B cell (primary cell): ENCODE measurements at regions of chr11 and their contacts with region 1.

Region 1: DNA sequence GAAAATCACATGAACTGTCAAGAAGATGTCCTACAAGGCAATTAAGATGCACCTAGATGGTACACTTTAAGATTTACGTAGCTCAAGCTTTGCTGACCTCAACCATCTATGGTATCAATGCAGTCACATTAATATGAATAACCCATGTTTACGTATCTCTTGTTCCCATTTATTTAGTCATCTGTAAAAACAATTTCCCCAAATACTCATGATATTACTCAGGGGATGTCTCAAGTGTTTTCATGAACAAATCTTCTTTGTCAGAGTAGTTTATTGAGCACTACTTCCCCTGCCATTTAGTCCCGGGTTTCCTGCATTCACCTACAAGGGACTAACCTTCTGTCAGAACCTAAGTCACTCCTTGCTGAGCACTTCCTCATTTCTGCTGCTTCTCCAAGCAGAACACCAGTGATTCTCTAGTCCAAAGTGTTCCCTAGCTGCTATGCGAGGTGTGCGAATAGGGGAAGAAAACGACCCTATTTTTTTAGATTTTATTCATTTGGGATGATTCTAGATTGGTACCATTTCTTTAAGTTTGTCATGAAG is 554.3 kb upstream of the LRRC4C start:
- DNase-seq: no peak
- ATAC-seq: no peak
- H3K4me3 ChIP-seq: no peak overlapping the region
- H3K4me3 Mint-ChIP-seq: no peak overlapping the region
- H3K27ac ChIP-seq: no peak overlapping the region
- H3K27ac Mint-ChIP-seq: no peak overlapping the region
- H3K4me1 ChIP-seq: no peaks in the 10 kb centered on the region
- H3K4me1 Mint-ChIP-seq: no peaks in the 10 kb centered on the region
- H3K27me3 ChIP-seq: no peaks in the 10 kb centered on the region
- H3K27me3 Mint-ChIP-seq: no peaks in the 10 kb centered on the region
- CTCF ChIP-seq: no peak

Region 2: GRCh38 chr11:41954034-41954433 is 59.7 kb before region 1 on chr11:
- CTCF ChIA-PET with region 1: no interaction called
- POLR2A ChIA-PET with region 1: no interaction called
- intact Hi-C with region 1: no loop called
- DNase-seq: no peak
- ATAC-seq: no peak
- H3K4me3 ChIP-seq: no peak overlapping the region
- H3K4me3 Mint-ChIP-seq: no peak overlapping the region
- H3K27ac ChIP-seq: no peak overlapping the region
- H3K27ac Mint-ChIP-seq: no peak overlapping the region
- H3K4me1 ChIP-seq: no peaks in the 10 kb centered on the region
- H3K4me1 Mint-ChIP-seq: no peaks in the 10 kb centered on the region
- H3K27me3 ChIP-seq: no peaks in the 10 kb centered on the region
- H3K27me3 Mint-ChIP-seq: no peaks in the 10 kb centered on the region
- CTCF ChIP-seq: no peak

Region 3: DNA sequence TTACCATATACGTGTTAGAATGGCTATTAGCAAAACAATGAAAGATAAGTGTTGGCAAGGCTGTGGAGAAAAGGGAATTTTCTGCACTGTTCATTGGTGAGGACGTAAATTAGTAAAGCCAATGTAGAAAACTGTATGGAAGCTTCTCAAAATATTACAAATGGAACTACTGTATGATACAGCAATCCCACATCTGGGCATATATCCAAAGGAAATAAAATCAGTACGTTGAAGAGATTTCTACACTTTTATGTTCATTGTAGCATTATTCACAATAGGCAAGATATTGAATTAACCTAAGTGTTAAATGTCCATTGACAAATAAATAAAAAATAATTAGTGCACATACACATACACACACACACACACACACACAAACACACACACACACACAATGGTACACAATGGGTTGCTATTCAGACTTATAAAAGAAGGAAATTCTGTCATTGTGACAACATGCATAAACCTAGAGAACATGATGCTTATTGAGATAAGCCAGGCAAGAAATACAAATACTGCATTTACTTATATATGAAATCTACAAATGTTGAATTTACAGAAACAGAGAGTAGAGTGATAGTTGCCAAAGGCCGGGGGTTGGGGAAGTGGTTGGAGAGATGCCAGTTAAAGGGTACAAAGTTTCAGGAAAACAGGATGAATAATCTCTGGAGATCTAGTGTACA is 11.5 kb after region 1 on chr11:
- CTCF ChIA-PET with region 1: no interaction called
- POLR2A ChIA-PET with region 1: no interaction called
- intact Hi-C with region 1: no loop called
- DNase-seq: no peak
- ATAC-seq: no peak
- H3K4me3 ChIP-seq: no peak overlapping the region
- H3K4me3 Mint-ChIP-seq: no peak overlapping the region
- H3K27ac ChIP-seq: no peak overlapping the region
- H3K27ac Mint-ChIP-seq: no peak overlapping the region
- H3K4me1 ChIP-seq: no peaks in the 10 kb centered on the region
- H3K4me1 Mint-ChIP-seq: no peaks in the 10 kb centered on the region
- H3K27me3 ChIP-seq: no peaks in the 10 kb centered on the region
- H3K27me3 Mint-ChIP-seq: no peaks in the 10 kb centered on the region
- CTCF ChIP-seq: no peak

Region 4: GRCh38 chr11:42075180-42075579 is 61.5 kb after region 1 on chr11:
- CTCF ChIA-PET with region 1: no interaction called
- POLR2A ChIA-PET with region 1: no interaction called
- intact Hi-C with region 1: loop called (anchors 10 kb)
- DNase-seq: no peak
- ATAC-seq: no peak
- H3K4me3 ChIP-seq: no peak overlapping the region
- H3K4me3 Mint-ChIP-seq: no peak overlapping the region
- H3K27ac ChIP-seq: no peak overlapping the region
- H3K27ac Mint-ChIP-seq: no peak overlapping the region
- H3K4me1 ChIP-seq: no peaks in the 10 kb centered on the region
- H3K4me1 Mint-ChIP-seq: no peaks in the 10 kb centered on the region
- H3K27me3 ChIP-seq: no peaks in the 10 kb centered on the region
- H3K27me3 Mint-ChIP-seq: no peaks in the 10 kb centered on the region
- CTCF ChIP-seq: no peak